ENCODE measurements at regions of chr22 and their contacts with region 1.

Region 1: GRCh38 chr22:24951942-24952836 is at the start of gene KIAA1671:
- DNase-seq: peak; percentile 64 to 93 (median 82)
- H3K4me3 ChIP-seq: peak within 1 kb of the TSS; percentile 45 to 94 (median 80)
- H3K27ac ChIP-seq: peak within 1 kb of the TSS in 57 of 59 donors; percentile 38 to 97 (median 84)
- H3K27me3 ChIP-seq: peaks cover 0 to 8% (median 0%) of the 10 kb centered on the region in 45 donors
- CTCF ChIP-seq: peak; percentile 72 to 100 (median 95)
- total RNA-seq, gene KIAA1671: 27.6 to 81.6 (median 55.1) TPM

Region 2: DNA sequence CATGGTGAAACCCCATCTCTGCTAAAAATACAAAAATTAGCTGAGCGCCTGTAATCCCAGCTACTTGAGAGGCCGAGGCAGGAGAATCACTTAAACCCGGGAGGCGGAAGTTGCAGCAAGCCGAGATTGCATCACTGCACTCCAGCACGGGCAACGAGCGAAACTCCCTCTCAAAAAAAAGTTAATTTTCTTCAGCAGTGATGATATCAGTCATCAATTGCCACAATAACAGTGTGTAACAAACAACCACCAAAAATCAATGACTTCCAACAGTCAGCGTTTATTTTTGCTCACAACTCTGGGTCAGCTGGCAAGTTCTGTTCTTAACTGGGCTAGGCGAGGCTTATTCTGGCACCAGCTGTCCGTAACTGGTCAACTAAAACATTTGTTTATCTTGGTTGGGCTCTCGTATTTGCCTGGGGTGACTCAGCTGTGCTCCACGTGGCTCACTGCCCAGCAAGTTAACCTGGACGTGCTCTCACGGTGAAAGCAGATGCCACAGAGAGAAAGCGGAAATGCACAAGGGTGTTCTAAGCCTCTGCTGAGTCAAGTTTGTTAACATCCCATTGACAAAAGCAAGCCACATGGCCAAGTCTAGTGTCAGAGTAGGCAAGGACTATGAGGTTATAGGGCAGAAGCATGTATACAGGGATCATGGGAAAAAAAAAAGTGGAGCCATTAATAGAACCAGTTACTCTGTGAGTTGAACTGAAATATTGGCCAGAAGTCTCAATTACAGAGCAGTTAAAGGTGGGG is 57.8 kb before region 1 on chr22:
- intact Hi-C with region 1: no loop called
- DNase-seq: peak in 3 of 10 donors; percentile 10 to 15 (median 12)
- H3K4me3 ChIP-seq: no peak overlapping the region
- H3K27ac ChIP-seq: peak overlapping the region in 15 of 59 donors; percentile 2 to 61 (median 26)
- H3K27me3 ChIP-seq: no peaks in the 10 kb centered on the region
- CTCF ChIP-seq: no peak

Region 3: GRCh38 chr22:24985826-24986214 is 33.6 kb after region 1 on chr22:
- intact Hi-C with region 1: loop called in 1 of 2 experiments (anchors 5 kb)
- DNase-seq: peak in 4 of 10 donors; percentile 29 to 62 (median 50)
- H3K4me3 ChIP-seq: peak overlapping the region in 18 of 59 donors; percentile 0 to 48 (median 30)
- H3K27ac ChIP-seq: peak overlapping the region in 31 of 59 donors; percentile 14 to 78 (median 53)
- H3K27me3 ChIP-seq: no peaks in the 10 kb centered on the region
- CTCF ChIP-seq: no peak

Region 4: GRCh38 chr22:25048659-25049647 is 96.8 kb after region 1 on chr22:
- intact Hi-C with region 1: loop called (anchors 2 kb)
- DNase-seq: peak in 9 of 10 donors; percentile 44 to 78 (median 65)
- H3K4me3 ChIP-seq: no peak overlapping the region
- H3K27ac ChIP-seq: peak overlapping the region in 43 of 59 donors; percentile 10 to 81 (median 52)
- H3K27me3 ChIP-seq: no peaks in the 10 kb centered on the region
- CTCF ChIP-seq: peak; percentile 71 to 97 (median 90)

Region 5: GRCh38 chr22:25219948-25220442 is 267.8 kb after region 1 on chr22:
- intact Hi-C with region 1: no loop called
- DNase-seq: no peak
- H3K4me3 ChIP-seq: no peak overlapping the region
- H3K27ac ChIP-seq: no peak overlapping the region
- H3K27me3 ChIP-seq: peaks cover 0 to 9% (median 0%) of the 10 kb centered on the region in 45 donors
- CTCF ChIP-seq: no peak

Region 6: DNA sequence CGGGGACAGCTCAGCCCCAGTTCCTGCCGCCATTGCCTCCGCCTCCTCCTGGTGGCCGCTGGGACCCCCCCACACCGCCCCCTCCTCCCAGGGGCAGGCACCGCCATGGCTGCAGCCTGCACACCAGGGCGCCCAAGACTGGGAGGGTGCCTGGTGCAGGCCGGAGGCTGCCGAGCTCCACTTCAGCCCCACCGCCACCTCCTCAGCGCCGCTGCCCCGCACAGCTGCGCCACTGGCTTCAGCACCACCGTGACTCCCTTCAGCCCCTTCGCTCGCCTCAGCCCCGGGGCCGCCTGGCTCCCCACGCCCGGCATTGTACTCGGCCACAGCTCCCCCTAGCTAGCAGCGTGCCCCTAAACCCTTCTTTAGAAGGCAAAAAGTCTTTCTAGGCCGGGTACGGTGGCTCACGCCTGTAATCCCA is 398.4 kb after region 1 on chr22:
- intact Hi-C with region 1: no loop called
- DNase-seq: peak in 2 of 10 donors; percentile 8 to 20
- H3K4me3 ChIP-seq: no peak overlapping the region
- H3K27ac ChIP-seq: no peak overlapping the region
- H3K27me3 ChIP-seq: no peaks in the 10 kb centered on the region
- CTCF ChIP-seq: no peak